PC-9 (cell line): ENCODE measurements at regions of chr17 and their contacts with region 1.

Region 1: DNA sequence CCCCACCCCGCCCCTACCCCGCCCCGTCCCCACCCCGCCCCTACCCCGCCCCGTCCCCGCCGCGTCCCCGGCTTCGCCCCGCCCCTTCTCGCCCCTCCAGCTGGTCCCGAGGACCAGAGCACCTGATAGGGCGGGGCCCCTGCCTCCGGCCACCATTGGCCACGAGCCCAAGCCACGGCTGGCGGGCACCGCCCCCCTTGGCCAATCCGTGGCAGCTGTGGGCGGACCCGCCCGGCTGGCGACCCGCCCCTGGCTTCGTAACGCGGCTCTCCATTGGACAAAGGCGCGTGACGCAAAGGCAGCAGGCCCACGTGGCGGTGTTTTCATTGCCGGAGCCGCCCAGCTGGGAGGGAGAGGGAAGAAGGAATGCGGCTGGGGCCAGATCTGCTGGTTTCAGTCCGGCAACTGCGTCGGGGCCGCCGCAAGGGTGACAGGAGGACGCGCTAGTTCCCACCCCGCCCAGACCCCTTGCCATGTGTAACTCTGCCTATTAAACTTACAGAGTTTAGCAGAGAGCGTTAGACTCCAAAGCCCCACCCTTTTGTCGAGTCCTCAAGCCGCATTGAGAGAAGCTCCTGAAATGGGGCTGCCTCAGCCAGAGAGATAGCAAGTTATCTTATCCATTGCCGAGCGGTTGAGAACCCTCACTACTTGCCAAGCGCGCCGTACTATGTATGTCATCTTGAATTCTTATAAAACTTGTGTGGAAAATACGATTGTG is 403 bp upstream of the WIPI1 start:
- DNase-seq: peak; percentile 93 to 99
- H3K4me3 ChIP-seq: peak overlapping the region; percentile 59
- H3K27ac ChIP-seq: no peak overlapping the region
- H3K4me1 ChIP-seq: peaks cover 34% of the 10 kb centered on the region
- H3K27me3 ChIP-seq: no peaks in the 10 kb centered on the region
- CTCF ChIP-seq: no peak

Region 2: GRCh38 chr17:66715745-66716156 is 1741.9 kb before region 1 on chr17:
- CTCF ChIA-PET with region 1: no interaction called
- POLR2A ChIA-PET with region 1: no interaction called
- intact Hi-C with region 1: loop called (anchors 10 kb)
- DNase-seq: peak; percentile 14 to 60
- H3K4me3 ChIP-seq: no peak overlapping the region
- H3K27ac ChIP-seq: no peak overlapping the region
- H3K4me1 ChIP-seq: peaks cover 14% of the 10 kb centered on the region
- H3K27me3 ChIP-seq: no peaks in the 10 kb centered on the region
- CTCF ChIP-seq: peak; percentile 83

Region 3: DNA sequence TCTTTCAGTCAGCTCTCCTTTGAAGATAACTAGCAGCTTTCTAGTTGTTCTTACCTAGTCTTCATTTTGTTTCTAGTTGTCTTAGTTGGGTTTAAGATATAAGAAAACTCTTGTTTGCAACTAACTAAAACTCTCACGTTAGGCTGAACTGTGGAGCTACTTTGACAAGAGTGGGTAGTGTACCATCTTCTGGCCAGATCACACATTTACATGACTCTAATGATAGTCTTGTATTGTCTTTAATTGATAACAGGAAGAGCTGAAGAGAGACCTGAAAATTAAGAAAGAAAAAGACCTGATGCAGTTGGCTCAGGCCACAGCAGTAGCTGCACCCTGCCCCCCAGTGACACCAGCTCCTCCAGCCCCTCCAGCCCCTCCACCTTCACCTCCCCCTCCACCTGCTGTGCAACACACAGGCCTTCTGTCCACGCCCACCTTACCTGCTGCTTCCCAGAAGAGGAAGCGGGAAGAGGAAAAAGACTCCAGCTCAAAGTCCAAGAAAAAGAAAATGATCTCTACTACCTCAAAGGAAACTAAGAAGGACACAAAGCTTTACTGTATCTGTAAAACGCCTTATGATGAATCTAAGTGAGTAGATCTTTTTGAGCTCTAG is 498.3 kb before region 1 on chr17:
- CTCF ChIA-PET with region 1: no interaction called
- POLR2A ChIA-PET with region 1: no interaction called
- intact Hi-C with region 1: loop called (anchors 10 kb)
- DNase-seq: no peak
- H3K4me3 ChIP-seq: no peak overlapping the region
- H3K27ac ChIP-seq: no peak overlapping the region
- H3K4me1 ChIP-seq: no peaks in the 10 kb centered on the region
- H3K27me3 ChIP-seq: no peaks in the 10 kb centered on the region
- CTCF ChIP-seq: no peak

Region 4: GRCh38 chr17:68101075-68101992 is 356.4 kb before region 1 on chr17:
- CTCF ChIA-PET with region 1: no interaction called
- POLR2A ChIA-PET with region 1: no interaction called
- intact Hi-C with region 1: loop called (anchors 10 kb)
- DNase-seq: peak; percentile 83 to 94
- H3K4me3 ChIP-seq: peak overlapping the region; percentile 91
- H3K27ac ChIP-seq: no peak overlapping the region
- H3K4me1 ChIP-seq: peaks cover 15% of the 10 kb centered on the region
- H3K27me3 ChIP-seq: no peaks in the 10 kb centered on the region
- CTCF ChIP-seq: no peak

Region 5: GRCh38 chr17:68247445-68248198 is 210.1 kb before region 1 on chr17 and contains the start of gene AMZ2:
- CTCF ChIA-PET with region 1: interaction called, 14 read pairs
- POLR2A ChIA-PET with region 1: no interaction called
- intact Hi-C with region 1: loop called (anchors 1 kb)
- DNase-seq: peak; percentile 65 to 94
- H3K4me3 ChIP-seq: peak within 1 kb of the TSS; percentile 80
- H3K27ac ChIP-seq: peak within 1 kb of the TSS; percentile 63
- H3K4me1 ChIP-seq: peaks cover 10% of the 10 kb centered on the region
- H3K27me3 ChIP-seq: no peaks in the 10 kb centered on the region
- CTCF ChIP-seq: no peak
- total RNA-seq, gene AMZ2: 60.8 and 88.3 TPM in 2 replicates

Region 6: GRCh38 chr17:68512247-68512982 is 54.7 kb after region 1 on chr17 and contains the start of gene PRKAR1A:
- CTCF ChIA-PET with region 1: no interaction called
- POLR2A ChIA-PET with region 1: no interaction called
- intact Hi-C with region 1: loop called (anchors 2 kb)
- DNase-seq: peak; percentile 81 to 87
- H3K4me3 ChIP-seq: peak within 1 kb of the TSS; percentile 94
- H3K27ac ChIP-seq: peak within 1 kb of the TSS; percentile 63
- H3K4me1 ChIP-seq: peaks cover 20% of the 10 kb centered on the region
- H3K27me3 ChIP-seq: no peaks in the 10 kb centered on the region
- CTCF ChIP-seq: no peak
- total RNA-seq, gene PRKAR1A: 161 and 181 TPM in 2 replicates